Tibial artery (tissue), 4 donors: ENCODE measurements at regions of chr10 and their contacts with region 1.

Region 1: DNA sequence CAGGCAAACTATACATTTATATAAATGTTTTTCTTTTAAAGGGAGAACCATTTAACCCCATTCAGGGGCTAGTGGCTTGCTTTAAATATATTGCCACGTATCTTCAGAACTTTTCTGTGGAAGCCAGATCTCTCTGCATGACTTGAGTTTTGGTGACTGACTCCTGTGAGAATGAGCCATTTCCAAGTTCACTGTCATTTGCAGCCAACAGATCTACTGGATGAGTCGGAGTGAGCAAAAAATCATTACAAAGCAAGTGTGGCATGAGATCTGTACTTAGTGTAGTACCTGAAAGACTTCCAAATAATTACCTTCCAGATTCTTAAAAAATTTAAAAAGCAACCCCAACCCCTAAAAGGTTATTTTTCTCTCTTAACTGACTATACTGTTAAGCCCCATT is 45.6 kb downstream of the PDSS1 start:
- DNase-seq: no peak
- H3K4me3 ChIP-seq: no peak overlapping the region
- H3K27ac ChIP-seq: no peak overlapping the region
- H3K4me1 ChIP-seq: no peaks in the 10 kb centered on the region
- H3K27me3 ChIP-seq: no peaks in the 10 kb centered on the region
- CTCF ChIP-seq: no peak

Region 2: DNA sequence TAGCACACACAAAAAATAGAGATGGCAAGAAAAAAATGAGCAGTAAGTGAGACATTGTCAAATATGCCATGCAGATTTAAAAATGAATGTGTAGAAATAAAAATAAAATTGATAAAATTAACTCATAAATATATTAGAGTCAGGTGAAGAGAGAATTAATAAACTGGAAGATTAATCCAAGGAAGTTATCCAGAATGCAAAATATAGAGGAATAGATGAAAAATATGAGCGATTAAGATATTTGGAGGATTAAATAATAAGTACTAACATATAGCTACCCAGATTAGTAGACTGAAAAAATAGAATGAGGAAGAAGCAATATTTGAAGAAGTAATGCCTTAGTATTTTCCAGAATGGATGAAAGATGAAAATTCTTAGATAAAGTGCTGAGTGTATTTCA is 1464.9 kb before region 1 on chr10:
- intact Hi-C with region 1: loop called (anchors 10 kb)
- DNase-seq: no peak
- H3K4me3 ChIP-seq: no peak overlapping the region
- H3K27ac ChIP-seq: no peak overlapping the region
- H3K4me1 ChIP-seq: no peaks in the 10 kb centered on the region
- H3K27me3 ChIP-seq: no peaks in the 10 kb centered on the region
- CTCF ChIP-seq: no peak

Region 3: DNA sequence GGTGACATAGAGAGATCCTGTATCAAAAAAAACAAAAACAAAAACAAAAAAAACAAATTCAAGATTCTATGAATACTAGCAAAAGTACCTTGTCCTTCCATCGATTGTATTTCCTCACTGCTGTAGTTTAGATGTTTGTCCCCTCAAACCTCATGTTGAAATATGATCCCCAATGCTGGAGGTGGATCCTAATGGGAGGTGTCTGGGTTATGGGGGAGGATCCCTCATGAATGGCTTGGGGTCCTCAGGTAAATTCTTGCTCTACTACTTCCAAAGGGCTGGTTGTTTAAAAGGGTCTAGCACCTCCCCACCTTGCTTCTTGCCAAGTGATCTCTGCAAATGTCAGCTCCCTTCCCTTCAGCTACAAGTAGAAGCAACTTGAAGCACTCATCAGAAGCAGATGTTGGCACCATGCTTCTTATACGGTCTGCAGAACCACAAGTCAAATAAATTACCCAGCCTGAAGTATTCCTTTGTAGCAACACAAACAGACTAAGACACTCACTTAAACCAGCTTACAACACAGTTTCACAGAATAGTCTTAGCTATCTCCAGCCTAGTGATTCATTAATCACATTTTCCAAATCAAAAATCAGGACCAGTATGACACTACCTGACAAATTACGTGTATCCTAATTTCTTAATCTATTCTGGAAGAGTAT is 97.0 kb after region 1 on chr10:
- intact Hi-C with region 1: no loop called
- DNase-seq: no peak
- H3K4me3 ChIP-seq: no peak overlapping the region
- H3K27ac ChIP-seq: no peak overlapping the region
- H3K4me1 ChIP-seq: peaks cover 0 to 8% (median 0%) of the 10 kb centered on the region in 4 donors
- H3K27me3 ChIP-seq: no peaks in the 10 kb centered on the region
- CTCF ChIP-seq: no peak